MCF 10A (cell line): ENCODE measurements at regions of chr12 and their contacts with region 1.

Region 1: GRCh38 chr12:26119391-26119981 is 5.4 kb downstream of the BHLHE41 start:
- DNase-seq: peak; percentile 64
- H3K4me3 Mint-ChIP-seq: no peak overlapping the region
- H3K27ac Mint-ChIP-seq: no peak overlapping the region
- H3K4me1 Mint-ChIP-seq: peaks cover 22% of the 10 kb centered on the region
- H3K27me3 Mint-ChIP-seq: peaks cover 4% of the 10 kb centered on the region
- CTCF ChIP-seq: peak; percentile 63

Region 2: DNA sequence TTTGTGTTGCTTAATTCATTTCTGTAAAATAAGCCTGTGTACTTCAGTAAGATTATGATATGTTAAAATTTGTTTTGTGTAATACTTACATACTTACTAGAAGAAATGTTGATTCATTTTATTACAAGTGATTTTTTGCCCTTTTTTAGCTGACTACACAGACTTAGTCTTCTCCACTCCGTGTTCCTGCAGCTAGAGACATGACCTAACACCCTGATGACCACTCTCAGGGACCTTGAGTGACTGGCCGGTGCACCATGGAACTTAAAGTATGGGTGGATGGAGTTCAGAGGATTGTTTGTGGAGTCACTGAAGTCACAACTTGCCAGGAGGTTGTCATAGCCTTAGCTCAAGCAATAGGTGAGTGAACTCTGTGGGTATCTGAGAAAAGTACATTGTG is 64.4 kb before region 1 on chr12:
- CTCF ChIA-PET with region 1: no interaction called
- POLR2A ChIA-PET with region 1: no interaction called
- intact Hi-C with region 1: no loop called
- DNase-seq: no peak
- H3K4me3 Mint-ChIP-seq: no peak overlapping the region
- H3K27ac Mint-ChIP-seq: no peak overlapping the region
- H3K4me1 Mint-ChIP-seq: peaks cover 13% of the 10 kb centered on the region
- H3K27me3 Mint-ChIP-seq: no peaks in the 10 kb centered on the region
- CTCF ChIP-seq: no peak

Region 3: DNA sequence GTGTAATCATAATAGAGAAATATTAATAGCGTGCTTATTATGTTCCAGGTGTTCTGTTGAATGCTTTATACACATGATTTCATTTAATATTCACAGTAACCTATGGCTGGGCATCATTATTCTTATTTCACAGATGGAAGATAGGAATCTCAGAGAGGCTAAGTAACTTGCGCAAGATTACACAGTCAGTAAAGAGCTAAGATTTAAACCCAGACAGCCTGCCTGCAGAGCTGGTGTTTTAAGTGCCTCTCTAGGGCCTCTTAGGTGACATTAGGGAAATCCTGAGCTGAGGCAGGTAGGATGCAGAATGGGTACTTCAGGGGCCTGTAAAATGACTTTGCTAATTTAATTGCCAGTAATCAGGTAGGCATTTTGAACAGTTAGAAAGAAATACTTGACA is 23.8 kb after region 1 on chr12:
- CTCF ChIA-PET with region 1: no interaction called
- POLR2A ChIA-PET with region 1: no interaction called
- intact Hi-C with region 1: no loop called
- DNase-seq: no peak
- H3K4me3 Mint-ChIP-seq: no peak overlapping the region
- H3K27ac Mint-ChIP-seq: no peak overlapping the region
- H3K4me1 Mint-ChIP-seq: no peaks in the 10 kb centered on the region
- H3K27me3 Mint-ChIP-seq: no peaks in the 10 kb centered on the region
- CTCF ChIP-seq: no peak

Region 4: DNA sequence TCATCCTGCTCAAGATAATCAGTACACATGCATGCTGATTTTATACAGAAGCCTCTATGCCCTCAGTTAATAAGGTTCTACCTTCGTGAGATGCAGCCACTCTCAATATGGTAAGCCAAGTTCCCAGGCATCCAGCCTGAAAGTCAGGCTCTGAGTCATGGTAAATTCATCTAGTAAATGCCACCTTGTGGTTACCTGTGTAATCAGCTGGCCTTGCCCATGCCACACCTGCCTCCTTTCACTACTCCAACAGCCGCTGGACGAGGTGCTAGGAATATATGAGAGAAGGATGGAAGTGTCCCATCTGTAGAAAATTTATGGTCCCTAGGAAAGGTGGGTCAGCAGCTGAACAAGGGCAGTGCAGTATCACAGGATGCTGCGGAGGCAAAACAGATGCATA is 283.2 kb after region 1 on chr12:
- CTCF ChIA-PET with region 1: interaction called, 78 read pairs
- POLR2A ChIA-PET with region 1: interaction called, 12 read pairs
- intact Hi-C with region 1: loop called (anchors 1 kb)
- DNase-seq: peak; percentile 78
- H3K4me3 Mint-ChIP-seq: no peak overlapping the region
- H3K27ac Mint-ChIP-seq: no peak overlapping the region
- H3K4me1 Mint-ChIP-seq: no peaks in the 10 kb centered on the region
- H3K27me3 Mint-ChIP-seq: no peaks in the 10 kb centered on the region
- CTCF ChIP-seq: peak; percentile 42

Region 5: GRCh38 chr12:26434299-26435068 is 315.0 kb after region 1 on chr12:
- CTCF ChIA-PET with region 1: interaction called, 7 read pairs
- POLR2A ChIA-PET with region 1: interaction called, 4 read pairs
- intact Hi-C with region 1: loop called (anchors 1 kb)
- DNase-seq: peak; percentile 72
- H3K4me3 Mint-ChIP-seq: no peak overlapping the region
- H3K27ac Mint-ChIP-seq: no peak overlapping the region
- H3K4me1 Mint-ChIP-seq: no peaks in the 10 kb centered on the region
- H3K27me3 Mint-ChIP-seq: no peaks in the 10 kb centered on the region
- CTCF ChIP-seq: peak; percentile 80

Region 6: DNA sequence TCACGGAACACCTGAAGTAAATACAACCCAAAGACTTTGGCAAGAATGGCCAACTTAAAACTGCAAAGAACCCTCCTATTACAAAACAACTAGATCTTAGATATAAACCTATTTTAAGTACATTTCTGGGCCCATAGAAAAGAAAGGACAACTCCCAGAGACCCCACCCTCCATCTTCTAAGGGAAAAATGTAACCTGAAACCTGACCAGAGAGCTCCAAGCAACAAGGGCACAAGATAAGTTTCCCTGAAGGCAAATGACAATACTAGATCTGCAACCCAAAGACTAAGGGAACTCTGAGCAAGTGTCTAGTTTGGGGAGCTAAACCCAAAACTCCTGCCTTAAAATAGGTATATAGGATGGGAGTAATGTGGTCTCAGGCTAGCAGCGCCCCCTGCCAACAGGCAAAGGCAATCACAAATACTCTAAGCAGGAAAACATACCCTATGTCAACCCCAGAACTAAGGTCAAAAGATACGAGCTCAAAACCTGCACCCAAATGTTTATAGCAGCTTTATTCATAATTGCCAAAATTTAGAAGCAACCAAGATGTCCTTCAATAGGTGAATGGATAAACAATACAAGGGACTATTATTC is 494.6 kb after region 1 on chr12:
- CTCF ChIA-PET with region 1: interaction called, 5 read pairs
- POLR2A ChIA-PET with region 1: interaction called, 3 read pairs
- intact Hi-C with region 1: loop called (anchors 1 kb)
- DNase-seq: peak; percentile 51
- H3K4me3 Mint-ChIP-seq: no peak overlapping the region
- H3K27ac Mint-ChIP-seq: no peak overlapping the region
- H3K4me1 Mint-ChIP-seq: no peaks in the 10 kb centered on the region
- H3K27me3 Mint-ChIP-seq: no peaks in the 10 kb centered on the region
- CTCF ChIP-seq: peak; percentile 73

Region 7: GRCh38 chr12:26651566-26652188 is 532.2 kb after region 1 on chr12:
- CTCF ChIA-PET with region 1: interaction called, 27 read pairs
- POLR2A ChIA-PET with region 1: no interaction called
- intact Hi-C with region 1: loop called (anchors 1 kb)
- DNase-seq: peak; percentile 75
- H3K4me3 Mint-ChIP-seq: no peak overlapping the region
- H3K27ac Mint-ChIP-seq: no peak overlapping the region
- H3K4me1 Mint-ChIP-seq: peaks cover 16% of the 10 kb centered on the region
- H3K27me3 Mint-ChIP-seq: no peaks in the 10 kb centered on the region
- CTCF ChIP-seq: peak; percentile 89

Region 8: GRCh38 chr12:26701604-26702215 is 582.2 kb after region 1 on chr12:
- CTCF ChIA-PET with region 1: interaction called, 17 read pairs
- POLR2A ChIA-PET with region 1: interaction called, 4 read pairs
- intact Hi-C with region 1: loop called (anchors 5 kb)
- DNase-seq: peak; percentile 65
- H3K4me3 Mint-ChIP-seq: no peak overlapping the region
- H3K27ac Mint-ChIP-seq: no peak overlapping the region
- H3K4me1 Mint-ChIP-seq: peaks cover 13% of the 10 kb centered on the region
- H3K27me3 Mint-ChIP-seq: no peaks in the 10 kb centered on the region
- CTCF ChIP-seq: peak; percentile 66